Heart left ventricle (tissue), 16 donors: ENCODE measurements at regions of chr17 and their contacts with region 1.

Region 1: GRCh38 chr17:20226814-20227482 is 217.8 kb downstream of the SPECC1 start:
- DNase-seq: peak; percentile 76 to 89 (median 83)
- ATAC-seq: peak; percentile 83 to 98 (median 96)
- H3K4me3 ChIP-seq: no peak overlapping the region
- H3K27ac ChIP-seq: no peak overlapping the region
- H3K4me1 ChIP-seq: peaks cover 0 to 14% (median 0%) of the 10 kb centered on the region in 12 donors
- H3K27me3 ChIP-seq: no peaks in the 10 kb centered on the region
- CTCF ChIP-seq: peak; percentile 64 to 84 (median 78)
- POLR2A ChIP-seq: no peak

Region 2: DNA sequence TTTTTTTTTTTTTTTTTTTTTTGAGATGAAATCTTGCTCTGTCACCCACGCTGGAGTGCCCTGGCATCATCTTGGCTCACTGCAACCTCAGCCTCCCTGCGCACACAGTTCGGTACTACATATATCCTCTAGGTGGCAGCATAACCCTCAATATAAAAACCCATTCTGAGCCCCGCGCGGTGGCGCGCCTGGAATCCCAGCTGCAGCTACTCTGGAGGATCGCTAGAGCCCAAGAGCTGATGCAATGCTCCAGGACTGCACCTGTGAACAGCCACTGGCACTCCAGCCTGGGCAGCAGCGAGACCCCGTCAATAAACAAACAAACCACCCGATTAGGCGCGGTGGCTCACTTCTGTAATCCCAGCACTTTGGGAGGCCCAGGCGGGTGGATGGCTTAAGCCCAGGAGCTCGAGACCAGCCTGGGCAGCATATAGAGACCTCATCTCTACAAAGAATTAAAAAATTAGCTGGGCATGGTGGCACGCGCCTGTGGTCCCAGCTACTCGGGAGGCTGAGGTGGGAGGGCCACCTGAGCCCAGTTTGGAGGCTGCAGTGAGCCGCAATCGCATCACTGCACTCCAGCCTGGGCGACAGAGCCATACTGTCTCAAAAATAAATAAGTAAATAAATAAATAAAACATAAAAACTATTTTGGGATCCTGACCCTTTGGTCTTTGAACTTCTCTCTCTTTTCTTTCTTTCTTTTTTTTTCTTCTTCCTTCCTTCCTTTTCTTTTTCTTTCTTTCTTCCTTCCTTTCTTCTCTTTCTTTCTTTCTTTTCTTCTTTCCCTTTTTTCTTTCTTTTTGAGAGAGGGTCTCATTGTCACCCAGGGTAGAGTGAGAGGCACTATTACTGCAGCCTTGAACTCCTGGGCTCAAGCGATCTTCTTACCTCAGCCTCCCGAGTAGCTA is 233.9 kb before region 1 on chr17:
- intact Hi-C with region 1: loop called in 3 of 10 experiments (anchors 5 to 10 kb)
- DNase-seq: peak; percentile 82 to 94 (median 87)
- ATAC-seq: peak; percentile 95 to 99 (median 99)
- H3K4me3 ChIP-seq: peak overlapping the region in 2 of 12 donors; percentile 8 to 13
- H3K27ac ChIP-seq: no peak overlapping the region
- H3K4me1 ChIP-seq: peaks cover 0 to 11% (median 1%) of the 10 kb centered on the region in 12 donors
- H3K27me3 ChIP-seq: no peaks in the 10 kb centered on the region
- CTCF ChIP-seq: peak; percentile 66 to 82 (median 76)
- POLR2A ChIP-seq: no peak

Region 3: GRCh38 chr17:20121359-20122253 is 105.3 kb before region 1 on chr17:
- intact Hi-C with region 1: loop called in 8 of 10 experiments (anchors 5 to 10 kb)
- DNase-seq: peak in 4 of 5 donors; percentile 45 to 57 (median 49)
- ATAC-seq: peak; percentile 41 to 80 (median 68)
- H3K4me3 ChIP-seq: no peak overlapping the region
- H3K27ac ChIP-seq: no peak overlapping the region
- H3K4me1 ChIP-seq: peaks cover 0 to 28% (median 7%) of the 10 kb centered on the region in 12 donors
- H3K27me3 ChIP-seq: no peaks in the 10 kb centered on the region
- CTCF ChIP-seq: peak; percentile 76 to 94 (median 88)
- POLR2A ChIP-seq: no peak

Region 4: GRCh38 chr17:20315821-20316220 is 88.9 kb after region 1 on chr17:
- intact Hi-C with region 1: loop called in 9 of 10 experiments (anchors 5 to 10 kb)
- DNase-seq: no peak
- ATAC-seq: no peak
- H3K4me3 ChIP-seq: no peak overlapping the region
- H3K27ac ChIP-seq: no peak overlapping the region
- H3K4me1 ChIP-seq: peaks cover 0 to 6% (median 0%) of the 10 kb centered on the region in 12 donors
- H3K27me3 ChIP-seq: no peaks in the 10 kb centered on the region
- CTCF ChIP-seq: no peak
- POLR2A ChIP-seq: no peak

Region 5: DNA sequence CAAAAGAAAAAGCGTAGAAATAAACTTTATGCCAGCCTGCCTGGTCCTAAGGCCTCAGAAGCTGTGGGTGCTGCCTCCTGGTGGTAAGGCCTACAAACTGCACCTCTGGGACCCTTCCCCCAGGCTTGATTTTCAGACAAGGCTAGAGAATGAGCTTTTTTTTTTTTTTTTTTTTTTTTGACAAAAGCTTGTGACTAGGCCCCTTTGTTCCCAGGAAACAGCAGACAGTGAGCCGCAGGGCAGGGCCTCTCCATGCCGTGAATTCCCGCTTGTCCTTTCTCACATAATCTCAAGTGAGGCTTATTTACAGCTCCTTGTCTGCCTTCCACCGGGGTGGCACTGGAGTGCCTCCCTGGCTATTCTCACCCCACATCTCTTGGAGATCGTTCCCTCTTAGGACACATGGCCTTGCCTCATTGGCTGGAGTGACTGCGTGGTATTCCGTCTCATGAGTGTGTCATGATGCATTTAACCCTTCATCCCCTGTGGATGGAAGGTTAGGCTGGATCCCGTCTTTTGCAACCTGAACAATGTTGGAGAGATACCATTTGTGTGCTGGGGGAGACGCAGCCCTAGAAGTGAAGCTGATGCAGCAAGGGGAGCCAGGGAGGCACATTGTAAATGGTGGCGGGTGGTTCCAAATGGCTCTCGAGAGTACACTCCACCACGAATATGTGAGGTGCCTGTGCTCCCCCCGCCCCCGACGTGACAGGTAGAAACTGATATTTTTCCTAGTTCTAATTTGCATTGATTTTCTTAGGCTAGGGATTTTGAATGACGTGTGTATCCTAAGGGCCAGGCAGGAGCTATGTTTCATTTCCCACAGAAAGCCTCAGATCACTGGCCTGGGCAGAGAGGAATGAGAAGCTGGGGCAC is 766.3 kb after region 1 on chr17:
- intact Hi-C with region 1: loop called in 2 of 10 experiments (anchors 10 kb)
- DNase-seq: peak in 2 of 5 donors; percentile 60 to 66
- ATAC-seq: peak in 3 of 4 donors; percentile 35 to 60 (median 55)
- H3K4me3 ChIP-seq: peak overlapping the region in 6 of 12 donors; percentile 15 to 41 (median 33)
- H3K27ac ChIP-seq: peak overlapping the region in 4 of 12 donors; percentile 10 to 21 (median 16)
- H3K4me1 ChIP-seq: peaks cover 0 to 36% (median 9%) of the 10 kb centered on the region in 12 donors
- H3K27me3 ChIP-seq: no peaks in the 10 kb centered on the region
- CTCF ChIP-seq: peak; percentile 78 to 95 (median 88)
- POLR2A ChIP-seq: no peak